CD8-positive, alpha-beta T cell (primary cell): ENCODE measurements at regions of chr4 and their contacts with region 1.

Region 1: GRCh38 chr4:2354118-2354517 is 64.3 kb downstream of the ZFYVE28 start:
- DNase-seq: peak in 6 of 9 experiments; percentile 35 to 70 (median 53)
- ATAC-seq: peak; percentile 73
- H3K4me3 ChIP-seq: no peak overlapping the region
- H3K4me3 Mint-ChIP-seq: no peak overlapping the region
- H3K27ac ChIP-seq: no peak overlapping the region
- H3K27ac Mint-ChIP-seq: no peak overlapping the region
- H3K4me1 ChIP-seq: peaks cover 15% of the 10 kb centered on the region
- H3K4me1 Mint-ChIP-seq: peaks cover 9% of the 10 kb centered on the region
- H3K27me3 ChIP-seq: no peaks in the 10 kb centered on the region
- H3K27me3 Mint-ChIP-seq: no peaks in the 10 kb centered on the region
- CTCF ChIP-seq: peak; percentile 49

Region 2: GRCh38 chr4:2281575-2282343 is 72.4 kb before region 1 on chr4:
- CTCF ChIA-PET with region 1: interaction called, 8 read pairs
- POLR2A ChIA-PET with region 1: interaction called, 4 read pairs
- intact Hi-C with region 1: loop called (anchors 1 kb)
- DNase-seq: peak; percentile 73 to 98 (median 85)
- ATAC-seq: peak; percentile 83
- H3K4me3 ChIP-seq: peak overlapping the region in 1 of 2 experiments; percentile 30
- H3K4me3 Mint-ChIP-seq: peak overlapping the region; percentile 78
- H3K27ac ChIP-seq: peak overlapping the region; percentile 67 to 94
- H3K27ac Mint-ChIP-seq: peak overlapping the region; percentile 99
- H3K4me1 ChIP-seq: peaks cover 46% of the 10 kb centered on the region
- H3K4me1 Mint-ChIP-seq: peaks cover 41% of the 10 kb centered on the region
- H3K27me3 ChIP-seq: no peaks in the 10 kb centered on the region
- H3K27me3 Mint-ChIP-seq: no peaks in the 10 kb centered on the region
- CTCF ChIP-seq: peak; percentile 72

Region 3: DNA sequence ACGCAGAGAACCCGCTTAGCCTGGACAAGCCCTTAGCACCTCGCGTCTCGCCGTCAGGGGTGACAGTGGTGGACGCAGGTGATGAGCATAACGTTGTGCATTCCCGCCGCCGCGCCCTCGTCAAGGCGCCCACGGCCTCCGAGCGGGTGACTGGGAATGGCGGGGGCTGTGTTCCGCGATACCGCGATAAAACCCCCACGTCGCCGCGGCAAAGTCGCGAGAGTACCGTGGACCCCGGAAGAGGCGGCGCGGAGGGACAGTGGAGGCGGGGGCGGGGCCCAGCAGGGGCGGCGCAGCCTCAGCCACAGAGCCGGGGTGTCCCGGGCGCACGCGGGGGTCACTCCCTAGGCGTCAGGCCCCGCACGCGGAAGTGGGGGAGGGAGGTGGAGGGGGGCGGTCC is 10.5 kb after region 1 on chr4:
- CTCF ChIA-PET with region 1: interaction called, 11 read pairs
- POLR2A ChIA-PET with region 1: no interaction called
- intact Hi-C with region 1: no loop called
- DNase-seq: peak; percentile 32 to 83 (median 60)
- ATAC-seq: peak; percentile 85
- H3K4me3 ChIP-seq: peak overlapping the region; percentile 69 to 74
- H3K4me3 Mint-ChIP-seq: peak overlapping the region; percentile 75
- H3K27ac ChIP-seq: peak overlapping the region; percentile 52 to 65
- H3K27ac Mint-ChIP-seq: peak overlapping the region; percentile 83
- H3K4me1 ChIP-seq: peaks cover 19% of the 10 kb centered on the region
- H3K4me1 Mint-ChIP-seq: peaks cover 13% of the 10 kb centered on the region
- H3K27me3 ChIP-seq: no peaks in the 10 kb centered on the region
- H3K27me3 Mint-ChIP-seq: no peaks in the 10 kb centered on the region
- CTCF ChIP-seq: no peak